Body of pancreas (tissue), 4 donors: ENCODE measurements at regions of chr6 and their contacts with region 1.

Region 1: DNA sequence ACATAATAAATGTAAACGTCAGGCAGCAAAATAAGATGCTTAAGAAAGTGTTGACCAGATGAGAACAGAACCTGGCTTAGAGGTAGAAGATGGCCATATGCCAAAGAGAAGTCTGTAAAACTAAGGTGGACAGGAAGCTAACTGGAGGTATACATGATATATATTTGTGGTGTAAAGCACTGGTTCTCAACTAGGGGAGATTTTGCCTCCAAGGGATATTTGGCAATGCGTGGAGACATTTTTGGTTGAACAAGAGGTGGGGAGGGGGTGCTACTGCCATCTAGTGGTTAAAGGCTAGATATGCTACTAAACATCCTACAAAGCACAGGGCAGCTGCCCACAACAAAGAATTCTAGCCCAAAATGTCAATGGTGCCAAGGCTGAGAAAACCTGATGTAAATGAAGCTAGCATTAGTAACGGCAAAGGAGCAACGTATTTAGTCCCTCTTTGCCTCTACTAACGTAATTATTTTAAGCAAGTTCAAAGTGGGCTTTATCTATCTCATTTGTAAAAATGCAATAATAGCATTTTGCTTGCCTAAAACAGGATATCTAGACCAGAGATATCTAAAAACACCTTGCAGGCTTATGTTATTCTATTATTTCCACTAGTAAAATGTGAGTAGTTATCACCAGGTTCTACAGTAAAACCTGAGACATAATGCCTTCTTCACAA is 182.6 kb downstream of the RNGTT start:
- DNase-seq: peak; percentile 15 to 31 (median 26)
- ATAC-seq: peak; percentile 53
- H3K4me3 ChIP-seq: no peak overlapping the region
- H3K27ac ChIP-seq: no peak overlapping the region
- H3K4me1 ChIP-seq: no peaks in the 10 kb centered on the region
- H3K27me3 ChIP-seq: no peaks in the 10 kb centered on the region
- CTCF ChIP-seq: peak; percentile 17 to 65 (median 57)
- POLR2A ChIP-seq: no peak

Region 2: DNA sequence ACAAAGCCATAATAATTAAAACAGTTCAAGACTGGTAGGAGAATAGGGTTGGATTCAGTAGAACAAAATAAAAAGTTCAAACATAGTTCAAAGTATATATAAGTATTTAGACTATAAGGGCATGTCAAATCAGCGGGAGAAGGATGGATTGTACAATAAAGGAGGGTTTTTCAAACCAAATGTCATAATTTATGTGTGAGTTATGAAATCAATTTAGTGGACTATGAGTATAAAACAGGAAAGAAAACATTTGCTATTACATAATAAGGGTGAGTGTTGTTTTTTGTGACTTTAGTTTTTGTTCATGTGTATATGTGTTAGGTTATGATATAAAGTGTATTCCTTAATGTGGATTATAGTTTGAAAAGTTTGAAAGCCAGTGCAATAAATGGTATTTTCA is 1180.3 kb before region 1 on chr6:
- intact Hi-C with region 1: loop called (anchors 10 kb)
- DNase-seq: no peak
- ATAC-seq: no peak
- H3K4me3 ChIP-seq: no peak overlapping the region
- H3K27ac ChIP-seq: no peak overlapping the region
- H3K4me1 ChIP-seq: no peaks in the 10 kb centered on the region
- H3K27me3 ChIP-seq: no peaks in the 10 kb centered on the region
- CTCF ChIP-seq: no peak
- POLR2A ChIP-seq: no peak